GM12878 (cell line): ENCODE measurements at regions of chr10 and their contacts with region 1.

Region 1: GRCh38 chr10:995559-995926 is 7.3 kb downstream of the GTPBP4 start:
- DNase-seq: no peak
- ATAC-seq: no peak
- H3K4me3 ChIP-seq: no peak overlapping the region
- H3K27ac ChIP-seq: no peak overlapping the region
- H3K4me1 ChIP-seq: peaks cover 4% of the 10 kb centered on the region; the same call in 1 of the 2 replicates
- H3K27me3 ChIP-seq: no peaks in the 10 kb centered on the region
- CTCF ChIP-seq: no peak
- EP300 ChIP-seq: no peak
- POLR2A ChIP-seq: 0 out of 2 replicates have a peak, but pooled peaks have one; percentile 31
- RAD21 ChIP-seq: no peak

Region 2: GRCh38 chr10:1009071-1009494 is 13.5 kb after region 1 on chr10:
- CTCF ChIA-PET with region 1: no interaction called
- POLR2A ChIA-PET with region 1: no interaction called
- RAD21 ChIA-PET with region 1: no interaction called
- SMC1A ChIA-PET with region 1: no interaction called
- in situ Hi-C with region 1: no loop called
- intact Hi-C with region 1: loop called (anchors 2 kb)
- DNase-seq: no peak
- ATAC-seq: no peak
- H3K4me3 ChIP-seq: no peak overlapping the region
- H3K27ac ChIP-seq: no peak overlapping the region
- H3K4me1 ChIP-seq: no peaks in the 10 kb centered on the region
- H3K27me3 ChIP-seq: no peaks in the 10 kb centered on the region
- CTCF ChIP-seq: no peak
- EP300 ChIP-seq: no peak
- POLR2A ChIP-seq: no peak
- RAD21 ChIP-seq: no peak

Region 3: DNA sequence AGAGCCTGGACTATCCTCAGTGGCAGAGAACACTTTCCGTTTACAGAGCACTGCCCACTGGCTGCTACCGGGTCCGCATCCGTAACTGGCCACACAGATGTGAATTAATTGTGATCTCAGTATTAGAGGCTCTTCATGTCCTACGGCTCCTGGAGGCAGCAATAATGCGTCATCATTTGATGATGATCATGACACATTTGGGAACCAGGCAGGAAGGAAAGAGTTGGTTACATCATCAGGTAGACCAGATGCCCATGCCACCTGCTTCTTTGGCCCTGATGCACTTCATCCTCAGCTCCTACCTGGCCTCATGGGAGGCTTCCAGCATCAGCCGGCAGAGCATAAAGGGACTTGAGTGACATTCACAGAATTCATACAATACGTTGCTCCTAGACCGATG is 794.7 kb after region 1 on chr10:
- CTCF ChIA-PET with region 1: no interaction called
- POLR2A ChIA-PET with region 1: no interaction called
- RAD21 ChIA-PET with region 1: no interaction called
- SMC1A ChIA-PET with region 1: no interaction called
- in situ Hi-C with region 1: no loop called
- intact Hi-C with region 1: no loop called
- DNase-seq: no peak
- ATAC-seq: no peak
- H3K4me3 ChIP-seq: no peak overlapping the region
- H3K27ac ChIP-seq: no peak overlapping the region
- H3K4me1 ChIP-seq: no peaks in the 10 kb centered on the region
- H3K27me3 ChIP-seq: no peaks in the 10 kb centered on the region
- CTCF ChIP-seq: no peak
- EP300 ChIP-seq: no peak
- POLR2A ChIP-seq: no peak
- RAD21 ChIP-seq: no peak